Pancreas (tissue), 10 donors: ENCODE measurements at regions of chr9 and their contacts with region 1.

Region 1: DNA sequence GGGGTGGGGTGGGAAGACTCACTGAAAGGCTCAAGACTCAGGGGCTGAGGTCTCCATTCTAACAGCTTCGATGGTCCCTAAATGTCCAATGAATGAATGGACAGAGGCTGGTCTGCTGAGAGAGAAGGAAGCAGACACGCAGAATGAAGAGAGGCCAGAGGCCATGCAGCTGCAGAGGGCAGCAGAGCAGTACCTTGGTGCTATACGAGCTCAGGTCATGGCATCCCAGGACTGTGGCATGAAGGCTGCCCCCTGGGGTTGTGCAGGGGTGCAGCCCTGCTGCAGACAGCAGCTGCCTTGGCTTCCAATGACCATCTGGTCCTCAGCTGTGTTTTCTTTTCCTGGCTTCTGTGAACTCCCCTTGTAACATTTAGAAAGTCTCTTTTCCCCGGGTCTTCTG is 15.2 kb upstream of the CORO2A start:
- DNase-seq: no peak
- ATAC-seq: no peak
- H3K4me3 ChIP-seq: no peak overlapping the region
- H3K27ac ChIP-seq: no peak overlapping the region
- H3K4me1 ChIP-seq: no peaks in the 10 kb centered on the region
- H3K27me3 ChIP-seq: no peaks in the 10 kb centered on the region
- CTCF ChIP-seq: no peak

Region 2: DNA sequence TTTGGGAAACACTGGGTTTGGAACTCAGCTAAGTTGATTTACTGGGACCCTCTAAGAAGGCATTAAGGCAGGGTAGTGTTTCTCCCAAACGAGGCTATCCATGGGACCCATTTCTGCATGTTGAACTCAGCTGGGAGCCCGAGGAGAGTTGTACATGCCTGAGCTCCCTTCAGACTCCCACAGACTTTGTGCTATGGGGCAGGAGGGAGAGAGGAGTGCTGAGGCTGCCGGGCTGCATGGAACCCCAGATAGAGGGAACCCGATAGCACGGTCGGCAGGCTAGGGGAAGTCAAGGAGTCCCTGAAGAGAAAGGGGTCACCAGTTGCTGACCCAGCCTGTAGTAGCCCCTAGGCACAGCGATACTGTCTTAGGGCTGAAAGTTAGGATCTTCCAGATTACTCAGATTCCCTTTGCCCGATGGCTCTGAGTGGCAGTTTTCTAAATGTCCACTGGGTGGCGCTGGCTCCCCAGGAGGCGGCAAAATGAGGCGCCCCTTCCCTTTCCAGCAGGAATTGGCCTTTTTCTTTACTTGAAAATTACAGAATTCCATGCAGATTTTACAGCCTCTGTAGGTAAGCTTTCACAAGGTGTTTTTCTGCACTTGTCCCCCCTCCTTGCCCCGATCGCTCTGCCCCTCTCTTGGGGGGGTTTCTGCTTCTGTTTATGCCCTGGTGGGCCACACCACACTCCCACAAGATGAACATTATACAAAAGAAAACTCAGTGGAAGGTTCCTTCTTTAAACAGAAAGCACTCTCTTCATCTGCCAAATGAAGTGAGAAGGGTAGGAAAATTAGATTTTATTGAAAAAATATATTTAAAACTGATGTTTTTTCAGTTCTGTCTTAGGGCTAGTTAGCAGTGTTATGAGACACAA is 133.3 kb before region 1 on chr9:
- intact Hi-C with region 1: loop called in 1 of 3 experiments (anchors 10 kb)
- DNase-seq: peak in 5 of 6 donors; percentile 23 to 84 (median 48)
- ATAC-seq: peak; percentile 60 to 84 (median 76)
- H3K4me3 ChIP-seq: no peak overlapping the region
- H3K27ac ChIP-seq: no peak overlapping the region
- H3K4me1 ChIP-seq: peaks cover 0 to 13% (median 0%) of the 10 kb centered on the region in 3 donors
- H3K27me3 ChIP-seq: no peaks in the 10 kb centered on the region
- CTCF ChIP-seq: peak; percentile 83 to 96 (median 90)

Region 3: GRCh38 chr9:98287383-98287782 is 79.8 kb after region 1 on chr9:
- intact Hi-C with region 1: no loop called
- DNase-seq: no peak
- ATAC-seq: no peak
- H3K4me3 ChIP-seq: no peak overlapping the region
- H3K27ac ChIP-seq: no peak overlapping the region
- H3K4me1 ChIP-seq: no peaks in the 10 kb centered on the region
- H3K27me3 ChIP-seq: no peaks in the 10 kb centered on the region
- CTCF ChIP-seq: no peak